Activated naive CD4-positive, alpha-beta T cell treated with anti-CD3 and anti-CD28 coated beads for 36 hours (primary cell): ENCODE measurements at regions of chr16 and their contacts with region 1.

Region 1: GRCh38 chr16:3234543-3235541 is at the start of gene ZNF200:
- DNase-seq: peak; percentile 98
- H3K4me3 Mint-ChIP-seq: peak within 1 kb of the TSS; percentile 83
- H3K27ac Mint-ChIP-seq: peak within 1 kb of the TSS; percentile 90
- H3K4me1 Mint-ChIP-seq: peaks cover 28% of the 10 kb centered on the region
- H3K27me3 Mint-ChIP-seq: no peaks in the 10 kb centered on the region
- total RNA-seq, gene ZNF200: 9.7 to 10.1 TPM

Region 2: GRCh38 chr16:3188925-3189825 is 45.7 kb before region 1 on chr16:
- CTCF ChIA-PET with region 1: no interaction called
- intact Hi-C with region 1: loop called (anchors 2 kb)
- DNase-seq: peak; percentile 76
- H3K4me3 Mint-ChIP-seq: peak overlapping the region; percentile 79
- H3K27ac Mint-ChIP-seq: peak overlapping the region; percentile 84
- H3K4me1 Mint-ChIP-seq: peaks cover 46% of the 10 kb centered on the region
- H3K27me3 Mint-ChIP-seq: peaks cover 73% of the 10 kb centered on the region

Region 3: GRCh38 chr16:3214904-3215600 is 19.8 kb before region 1 on chr16:
- CTCF ChIA-PET with region 1: no interaction called
- intact Hi-C with region 1: loop called (anchors 1 kb)
- DNase-seq: peak; percentile 76
- H3K4me3 Mint-ChIP-seq: peak overlapping the region; percentile 54
- H3K27ac Mint-ChIP-seq: peak overlapping the region; percentile 96
- H3K4me1 Mint-ChIP-seq: peaks cover 31% of the 10 kb centered on the region
- H3K27me3 Mint-ChIP-seq: no peaks in the 10 kb centered on the region

Region 4: DNA sequence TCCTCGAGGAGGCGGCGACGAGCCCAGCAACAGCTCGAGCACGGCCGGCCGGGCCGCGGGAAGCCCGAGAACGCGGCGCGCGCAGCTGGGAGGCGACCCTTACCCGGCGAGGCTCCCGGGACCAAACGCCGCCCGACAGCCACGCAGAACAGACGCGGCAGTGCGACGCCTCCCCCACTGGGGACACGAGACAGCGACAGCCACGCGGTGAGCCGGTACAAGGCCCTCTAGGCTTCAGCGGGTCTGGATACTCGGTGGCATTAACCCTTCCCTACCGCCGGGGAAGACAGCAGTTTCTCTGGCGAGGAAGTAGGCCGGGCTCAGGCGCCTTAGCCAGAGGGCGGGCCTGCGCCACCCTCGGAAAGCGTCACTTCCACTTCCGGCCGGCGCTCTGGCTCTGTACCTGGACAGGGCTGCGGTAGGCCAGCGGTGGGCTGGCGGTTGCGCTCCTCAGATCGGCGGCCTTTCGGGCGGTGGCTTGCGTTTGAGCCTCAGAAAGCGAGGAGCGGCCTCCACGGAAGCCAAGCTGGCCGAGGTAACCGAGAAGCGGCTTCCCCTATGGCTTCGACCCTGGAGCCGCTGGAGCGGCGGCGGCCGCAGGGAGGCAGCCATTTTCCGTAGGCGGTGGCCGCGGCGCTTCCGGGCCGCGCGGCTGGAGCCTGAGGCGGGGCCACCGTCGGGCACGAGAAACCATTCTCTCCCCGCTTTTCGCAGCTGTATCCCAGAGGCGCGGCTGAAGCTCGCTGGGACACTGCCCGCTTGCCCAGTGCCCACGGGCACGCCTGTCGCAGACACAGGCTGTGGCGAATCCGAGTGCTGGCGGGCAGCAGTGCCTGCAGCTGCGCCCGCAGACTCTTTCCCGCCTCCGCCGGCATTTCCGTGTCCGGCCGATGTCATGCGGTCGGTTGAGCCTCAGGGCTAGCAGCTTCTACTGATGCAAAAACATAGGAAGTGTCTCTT is 70.5 kb after region 1 on chr16 and contains the starts of genes TIGD7 and ZNF75A:
- CTCF ChIA-PET with region 1: no interaction called
- intact Hi-C with region 1: loop called (anchors 1 kb)
- DNase-seq: peak; percentile 84
- H3K4me3 Mint-ChIP-seq: peak within 1 kb of the TSS; percentile 79
- H3K27ac Mint-ChIP-seq: peak within 1 kb of the TSS; percentile 77
- H3K4me1 Mint-ChIP-seq: peaks cover 21% of the 10 kb centered on the region
- H3K27me3 Mint-ChIP-seq: no peaks in the 10 kb centered on the region
- total RNA-seq, gene TIGD7: 3.8 to 4.1 TPM
- total RNA-seq, gene ZNF75A: 10.5 to 12.4 TPM

Region 5: DNA sequence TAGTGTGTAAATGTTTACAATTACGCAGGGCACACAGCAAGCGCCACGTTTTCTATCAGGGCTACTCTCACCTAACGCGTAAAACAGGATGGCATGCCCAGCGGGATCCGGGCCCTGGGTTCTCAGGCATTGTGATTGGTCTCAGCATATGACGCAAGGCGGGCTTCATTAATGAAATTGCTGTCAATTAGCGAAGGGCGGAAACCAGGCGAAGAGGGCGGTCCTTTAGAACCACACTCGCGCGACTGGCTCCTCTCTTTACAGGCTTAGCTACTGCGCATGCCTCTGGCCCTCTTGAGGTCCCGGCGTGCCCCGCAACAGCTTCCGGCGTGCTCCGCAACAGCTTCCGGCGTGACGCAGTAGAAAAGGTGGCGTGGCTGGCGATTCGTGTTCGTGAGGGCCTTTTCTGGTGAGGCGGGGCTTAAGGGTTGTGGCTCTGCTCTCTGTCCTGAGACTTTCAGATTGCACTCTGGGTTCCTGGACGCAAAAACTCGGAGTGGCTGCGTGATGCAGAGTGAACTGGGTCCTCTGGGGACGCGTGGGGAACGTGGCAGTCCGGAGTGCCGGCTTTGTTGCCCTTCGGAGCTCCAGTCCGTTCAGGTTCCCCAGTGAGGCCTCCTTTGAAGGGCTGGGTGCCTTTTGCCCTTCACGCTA is 130.1 kb after region 1 on chr16:
- CTCF ChIA-PET with region 1: no interaction called
- intact Hi-C with region 1: loop called (anchors 2 kb)
- DNase-seq: peak; percentile 91
- H3K4me3 Mint-ChIP-seq: peak overlapping the region; percentile 78
- H3K27ac Mint-ChIP-seq: peak overlapping the region; percentile 79
- H3K4me1 Mint-ChIP-seq: peaks cover 10% of the 10 kb centered on the region
- H3K27me3 Mint-ChIP-seq: peaks cover 3% of the 10 kb centered on the region

Region 6: DNA sequence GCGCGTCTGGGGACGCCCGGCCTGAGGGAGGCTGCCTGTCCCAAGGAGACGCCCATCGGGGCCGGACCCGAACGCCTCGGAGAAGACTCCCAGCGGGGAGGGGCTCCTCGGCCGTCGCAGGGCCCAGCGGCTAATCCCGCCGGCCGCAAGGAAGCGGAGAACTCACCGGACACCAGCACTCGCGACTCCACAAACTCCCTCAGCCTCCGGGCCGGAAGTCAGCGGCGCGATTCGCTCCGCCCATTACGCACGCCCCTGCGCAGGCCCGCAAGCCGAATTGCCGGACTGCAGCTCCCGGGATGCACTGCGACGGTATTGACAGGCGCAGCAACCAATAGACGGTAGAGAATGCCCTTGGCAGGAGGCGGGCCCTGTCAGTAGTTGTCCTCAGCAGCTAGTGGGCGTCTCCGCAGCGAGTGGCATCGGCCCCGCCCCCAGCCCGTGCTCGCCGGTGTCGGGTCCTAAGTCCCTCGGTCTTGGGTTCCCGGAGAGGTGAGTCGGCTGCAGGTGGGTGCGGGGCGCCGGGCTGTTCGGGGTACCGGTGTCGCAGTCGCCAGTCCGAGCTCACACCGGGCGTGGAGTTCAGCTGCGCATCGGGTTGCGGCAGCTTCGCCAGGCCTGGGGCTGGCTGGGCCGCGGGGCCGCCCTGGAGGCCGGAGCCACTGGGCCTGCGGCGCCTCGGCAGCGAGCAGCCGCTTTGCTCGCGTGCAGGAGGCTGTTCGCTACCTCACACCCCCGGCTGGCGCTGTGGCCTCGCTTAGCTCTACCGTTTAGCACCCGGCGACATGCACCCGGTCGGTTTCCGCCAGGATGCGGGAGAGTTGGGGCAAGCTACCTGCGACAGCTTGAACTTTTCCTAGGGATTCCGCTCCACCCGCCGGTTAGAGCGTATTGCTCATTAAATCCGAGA is 166.2 kb after region 1 on chr16 and contains the starts of genes ZNF174 and ZSCAN32:
- CTCF ChIA-PET with region 1: no interaction called
- intact Hi-C with region 1: loop called (anchors 1 kb)
- DNase-seq: peak; percentile 99
- H3K4me3 Mint-ChIP-seq: peak within 1 kb of the TSS; percentile 86
- H3K27ac Mint-ChIP-seq: peak within 1 kb of the TSS; percentile 75
- H3K4me1 Mint-ChIP-seq: peaks cover 39% of the 10 kb centered on the region
- H3K27me3 Mint-ChIP-seq: no peaks in the 10 kb centered on the region
- total RNA-seq, gene ZNF174: 5.8 to 6.3 TPM
- total RNA-seq, gene ZSCAN32: 6.5 to 7.9 TPM